ENCODE measurements at regions of chr18 and their contacts with region 1.

Region 1: DNA sequence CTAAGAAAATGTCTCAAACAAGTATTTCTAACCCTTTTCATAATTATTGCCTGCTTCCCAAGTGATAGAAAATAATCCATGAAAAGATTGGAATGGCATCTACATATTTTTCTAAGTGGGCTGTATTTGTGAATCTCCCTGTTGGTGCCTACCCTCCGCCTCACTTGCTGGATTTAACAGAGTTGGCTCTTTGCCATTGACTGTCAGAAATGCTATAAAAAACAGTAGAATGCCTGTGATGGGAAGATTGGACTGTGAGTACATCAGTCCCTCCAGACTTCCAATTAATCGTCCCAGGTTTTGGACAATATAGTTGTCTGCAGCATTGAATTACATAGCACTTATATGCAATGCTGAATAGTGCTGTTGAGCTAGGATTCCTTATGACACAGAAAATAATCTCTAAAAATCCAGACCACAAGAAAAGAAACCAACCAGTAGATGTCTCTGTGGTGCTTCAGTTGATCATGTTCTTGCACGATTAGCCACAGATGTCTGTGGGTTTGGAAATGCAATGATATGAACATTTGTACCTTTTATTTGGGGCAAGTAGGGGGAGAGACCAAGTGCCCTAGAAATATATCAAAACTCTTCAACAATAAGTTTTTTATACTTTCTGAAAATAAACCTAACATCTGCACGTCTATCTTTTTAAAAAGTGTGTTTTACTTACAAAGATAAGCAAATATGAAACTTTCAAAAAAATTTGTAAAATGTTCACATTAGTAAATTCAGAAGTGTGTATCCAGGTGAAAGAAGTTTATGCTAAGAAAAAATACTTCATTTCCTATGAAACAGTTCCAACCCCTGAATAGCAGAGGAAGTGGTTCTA is 88.5 kb downstream of the DYNAP start:
- ATAC-seq: peak in 6 of 8 experiments; percentile 53 to 93 (median 82)
- H3K4me3 ChIP-seq: no peak overlapping the region
- H3K27ac ChIP-seq: no peak overlapping the region
- H3K4me1 ChIP-seq: peaks cover 5 to 7% of the 10 kb centered on the region in 2 donors

Region 2: GRCh38 chr18:54506516-54507261 is 172.8 kb before region 1 on chr18:
- in situ Hi-C with region 1: no loop called
- ATAC-seq: no peak
- H3K4me3 ChIP-seq: no peak overlapping the region
- H3K27ac ChIP-seq: no peak overlapping the region
- H3K4me1 ChIP-seq: no peaks in the 10 kb centered on the region

Region 3: GRCh38 chr18:55220523-55220922 is 541.0 kb after region 1 on chr18:
- in situ Hi-C with region 1: loop called in 1 of 9 experiments (anchors 25 kb)
- ATAC-seq: no peak
- H3K4me3 ChIP-seq: no peak overlapping the region
- H3K27ac ChIP-seq: no peak overlapping the region
- H3K4me1 ChIP-seq: peaks cover 2 to 17% of the 10 kb centered on the region in 2 donors